Mammary epithelial cell (primary cell): ENCODE measurements at regions of chr3 and their contacts with region 1.

Region 1: GRCh38 chr3:112990672-112991602 is at the start of gene GTPBP8:
- DNase-seq: peak; percentile 91
- H3K4me3 ChIP-seq: peak within 1 kb of the TSS; percentile 70 to 84 (median 77)
- H3K27ac ChIP-seq: peak within 1 kb of the TSS; percentile 98
- H3K4me1 ChIP-seq: peaks cover 15% of the 10 kb centered on the region
- H3K27me3 ChIP-seq: no peaks in the 10 kb centered on the region
- CTCF ChIP-seq: peak in 1 of 2 donors; percentile 5
- total RNA-seq, gene GTPBP8: 18.0 to 31.8 TPM

Region 2: DNA sequence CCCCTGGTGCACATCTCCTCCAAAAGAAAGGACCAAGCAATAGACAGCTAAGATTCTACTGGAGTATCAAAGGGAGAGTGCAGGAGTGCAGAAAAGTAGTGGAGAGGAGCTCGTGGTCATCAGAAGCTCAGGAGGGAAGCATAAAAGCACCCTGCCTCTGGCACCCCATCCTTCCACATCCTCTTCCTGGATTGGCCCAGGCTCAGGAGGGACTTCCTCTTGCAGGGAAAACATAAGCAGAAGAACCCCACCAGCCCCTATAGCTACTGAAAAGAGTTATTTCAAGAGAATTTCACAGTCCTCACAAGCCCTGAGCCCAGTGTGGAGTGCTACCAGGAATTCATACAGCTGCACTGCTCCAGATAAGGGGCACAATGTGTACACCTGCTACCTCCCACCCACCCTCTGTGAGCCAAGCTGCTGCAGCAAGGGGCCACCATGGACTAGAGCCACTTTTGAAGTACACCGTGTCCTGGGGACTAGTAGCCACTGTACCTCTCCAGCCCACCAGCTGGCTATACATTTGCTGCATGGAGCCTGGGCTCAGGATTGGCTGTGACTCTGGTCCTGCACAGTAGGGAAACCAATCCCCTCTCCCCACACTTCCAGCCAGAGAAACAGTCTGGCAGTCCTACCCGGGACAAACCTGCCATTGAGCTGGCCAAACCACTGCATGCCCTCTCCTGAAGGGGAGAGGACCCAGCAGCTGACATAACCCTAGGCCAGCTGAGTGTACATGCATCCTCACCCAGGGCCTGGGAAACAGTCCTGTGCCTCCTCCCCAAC is 59.0 kb before region 1 on chr3:
- CTCF ChIA-PET with region 1: no interaction called
- dilution Hi-C with region 1: no loop called
- in situ Hi-C with region 1: no loop called
- intact Hi-C with region 1: no loop called
- DNase-seq: no peak
- H3K4me3 ChIP-seq: no peak overlapping the region
- H3K27ac ChIP-seq: no peak overlapping the region
- H3K4me1 ChIP-seq: no peaks in the 10 kb centered on the region
- H3K27me3 ChIP-seq: peaks cover 3% of the 10 kb centered on the region
- CTCF ChIP-seq: no peak

Region 3: GRCh38 chr3:113019182-113020137 is 28.5 kb after region 1 on chr3:
- CTCF ChIA-PET with region 1: no interaction called
- dilution Hi-C with region 1: no loop called
- in situ Hi-C with region 1: no loop called
- intact Hi-C with region 1: loop called (anchors 2 kb)
- DNase-seq: peak; percentile 86
- H3K4me3 ChIP-seq: peak overlapping the region; percentile 70 to 99 (median 88)
- H3K27ac ChIP-seq: peak overlapping the region; percentile 94
- H3K4me1 ChIP-seq: peaks cover 23% of the 10 kb centered on the region
- H3K27me3 ChIP-seq: no peaks in the 10 kb centered on the region
- CTCF ChIP-seq: no peak